Activated CD4-positive, alpha-beta memory T cell treated with anti-CD3 and anti-CD28 coated beads, Interleukin-2, amount 10 ng/mL, durations not matched to agents 7 days and 5 days (primary cell): ENCODE measurements at regions of chr10 and their contacts with region 1.

Region 1: DNA sequence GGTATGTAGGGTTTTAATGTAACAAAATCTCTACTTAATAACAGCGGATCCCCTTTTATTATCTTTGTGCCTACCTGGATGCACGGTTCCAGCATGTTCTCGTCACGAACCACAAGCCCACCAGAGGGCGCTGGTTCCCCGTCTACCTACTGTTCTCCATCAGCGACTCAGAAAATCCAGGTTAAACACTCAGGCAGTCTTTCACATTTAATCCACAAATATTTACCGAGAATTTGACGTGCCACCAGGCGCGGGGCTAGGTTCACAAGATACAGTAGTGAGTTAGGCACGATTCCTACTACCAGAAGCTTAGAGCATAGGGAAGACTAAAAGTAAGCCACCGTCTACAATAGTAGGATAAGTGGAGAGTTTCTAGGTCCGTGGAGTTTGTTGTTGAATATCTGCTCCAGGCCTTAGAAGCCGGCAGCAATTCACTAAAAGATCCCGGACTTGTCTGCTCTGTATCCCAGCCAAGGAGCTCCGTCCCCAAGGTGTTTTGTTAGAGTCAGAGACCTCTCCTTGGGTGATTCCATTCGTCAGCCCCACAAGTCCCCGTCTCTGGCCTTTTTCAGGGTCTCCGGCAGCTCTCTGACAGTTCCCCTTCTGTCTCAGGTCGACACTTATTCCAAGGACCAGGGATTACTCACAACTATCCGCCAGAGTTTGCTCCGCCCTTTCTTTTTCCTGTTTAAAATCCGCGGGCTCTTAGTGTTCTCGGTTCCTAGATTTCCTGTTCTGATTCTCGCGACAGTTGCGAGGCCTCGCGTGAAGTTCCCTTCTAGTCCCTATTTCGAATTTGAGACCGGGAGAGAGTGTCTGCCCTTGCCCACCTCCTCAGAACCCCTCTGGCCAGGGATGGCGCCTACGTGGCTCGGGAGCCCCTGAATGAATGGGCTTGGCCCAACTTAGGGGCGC is 1.5 kb upstream of the KAZALD1 start:
- DNase-seq: peak; percentile 91
- H3K4me3 Mint-ChIP-seq: peak overlapping the region; percentile 84
- H3K27ac Mint-ChIP-seq: peak overlapping the region; percentile 83
- H3K4me1 Mint-ChIP-seq: peaks cover 48% of the 10 kb centered on the region
- H3K27me3 Mint-ChIP-seq: peaks cover 23% of the 10 kb centered on the region

Region 2: GRCh38 chr10:101031128-101031795 is 29.0 kb before region 1 on chr10 and contains the starts of genes PDZD7 and SFXN3:
- CTCF ChIA-PET with region 1: interaction called, 515 read pairs
- POLR2A ChIA-PET with region 1: interaction called, 31 read pairs
- DNase-seq: peak; percentile 97
- H3K4me3 Mint-ChIP-seq: peak within 1 kb of the TSS; percentile 91
- H3K27ac Mint-ChIP-seq: peak within 1 kb of the TSS; percentile 96
- H3K4me1 Mint-ChIP-seq: peaks cover 27% of the 10 kb centered on the region
- H3K27me3 Mint-ChIP-seq: peaks cover 14% of the 10 kb centered on the region
- total RNA-seq, gene PDZD7: 1.1 to 1.9 TPM
- total RNA-seq, gene SFXN3: 91.4 to 95.0 TPM

Region 3: GRCh38 chr10:101478956-101479355 is 418.7 kb after region 1 on chr10:
- CTCF ChIA-PET with region 1: no interaction called
- POLR2A ChIA-PET with region 1: no interaction called
- DNase-seq: no peak
- H3K4me3 Mint-ChIP-seq: no peak overlapping the region
- H3K27ac Mint-ChIP-seq: no peak overlapping the region
- H3K4me1 Mint-ChIP-seq: peaks cover 3% of the 10 kb centered on the region
- H3K27me3 Mint-ChIP-seq: no peaks in the 10 kb centered on the region